ENCODE measurements at regions of chr6 and their contacts with region 1.

Region 1: GRCh38 chr6:32971581-32972352 is 3.4 kb downstream of the BRD2 start:
- DNase-seq: peak in 1 of 2 donors; percentile 100
- H3K4me3 ChIP-seq: peak overlapping the region; percentile 71 to 80
- H3K27ac ChIP-seq: peak overlapping the region; percentile 100
- H3K4me1 ChIP-seq: peaks cover 40% of the 10 kb centered on the region
- H3K27me3 ChIP-seq: no peaks in the 10 kb centered on the region
- CTCF ChIP-seq: peak in 1 of 3 experiments; percentile 4
- POLR2A ChIP-seq: peak; percentile 81 to 100

Region 2: GRCh38 chr6:31197559-31198305 is 1774.0 kb before region 1 on chr6:
- intact Hi-C with region 1: no loop called
- DNase-seq: no peak
- H3K4me3 ChIP-seq: peak overlapping the region; percentile 60 to 71
- H3K27ac ChIP-seq: peak overlapping the region; percentile 93
- H3K4me1 ChIP-seq: peaks cover 12% of the 10 kb centered on the region
- H3K27me3 ChIP-seq: no peaks in the 10 kb centered on the region
- CTCF ChIP-seq: no peak
- POLR2A ChIP-seq: peak in 1 of 2 donors; percentile 71

Region 3: GRCh38 chr6:31971993-31972708 is 999.6 kb before region 1 on chr6 and contains the start of gene DXO:
- intact Hi-C with region 1: loop called (anchors 10 kb)
- DNase-seq: peak in 1 of 2 donors; percentile 99
- H3K4me3 ChIP-seq: peak within 1 kb of the TSS; percentile 74 to 76
- H3K27ac ChIP-seq: peak within 1 kb of the TSS; percentile 95
- H3K4me1 ChIP-seq: peaks cover 42% of the 10 kb centered on the region
- H3K27me3 ChIP-seq: no peaks in the 10 kb centered on the region
- CTCF ChIP-seq: no peak
- POLR2A ChIP-seq: peak in 1 of 2 donors; percentile 41
- total RNA-seq, gene DXO: 15.5 TPM

Region 4: GRCh38 chr6:32843979-32844838 is 127.6 kb before region 1 on chr6 and contains the start of gene PSMB8:
- intact Hi-C with region 1: loop called (anchors 5 kb)
- DNase-seq: peak in 1 of 2 donors; percentile 98
- H3K4me3 ChIP-seq: peak within 1 kb of the TSS; percentile 57 to 86
- H3K27ac ChIP-seq: peak within 1 kb of the TSS; percentile 99
- H3K4me1 ChIP-seq: peaks cover 26% of the 10 kb centered on the region
- H3K27me3 ChIP-seq: no peaks in the 10 kb centered on the region
- CTCF ChIP-seq: no peak
- POLR2A ChIP-seq: peak; percentile 62 to 95
- total RNA-seq, gene PSMB8: 31.9 TPM

Region 5: GRCh38 chr6:32894080-32895005 is 77.4 kb before region 1 on chr6:
- intact Hi-C with region 1: loop called (anchors 5 kb)
- DNase-seq: peak in 1 of 2 donors; percentile 95
- H3K4me3 ChIP-seq: peak overlapping the region; percentile 75 to 79
- H3K27ac ChIP-seq: peak overlapping the region; percentile 95
- H3K4me1 ChIP-seq: peaks cover 34% of the 10 kb centered on the region
- H3K27me3 ChIP-seq: no peaks in the 10 kb centered on the region
- CTCF ChIP-seq: no peak
- POLR2A ChIP-seq: peak in 1 of 2 donors; percentile 45

Region 6: DNA sequence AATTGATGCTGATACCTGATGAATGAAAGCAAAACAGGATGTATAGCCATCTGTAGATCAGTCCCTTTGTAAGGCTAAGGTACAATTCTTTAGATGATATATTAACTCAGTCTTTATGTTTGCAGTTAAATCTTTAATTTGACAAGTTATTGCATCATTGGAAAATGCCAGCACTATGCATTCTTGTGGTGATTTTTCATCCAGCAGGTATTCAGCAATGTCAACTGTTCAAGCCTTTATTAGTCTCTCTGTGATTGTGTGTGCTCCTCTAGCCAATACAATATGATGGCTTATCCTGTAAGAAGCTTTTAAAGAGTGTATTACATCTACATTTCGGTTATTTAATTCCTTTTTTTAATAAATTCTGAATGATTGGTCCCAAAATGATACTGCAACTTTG is 65.2 kb before region 1 on chr6:
- intact Hi-C with region 1: no loop called
- DNase-seq: no peak
- H3K4me3 ChIP-seq: no peak overlapping the region
- H3K27ac ChIP-seq: no peak overlapping the region
- H3K4me1 ChIP-seq: no peaks in the 10 kb centered on the region
- H3K27me3 ChIP-seq: no peaks in the 10 kb centered on the region
- CTCF ChIP-seq: no peak
- POLR2A ChIP-seq: no peak

Region 7: GRCh38 chr6:33904050-33904746 is 932.4 kb after region 1 on chr6:
- intact Hi-C with region 1: no loop called
- DNase-seq: no peak
- H3K4me3 ChIP-seq: no peak overlapping the region
- H3K27ac ChIP-seq: no peak overlapping the region
- H3K4me1 ChIP-seq: peaks cover 13% of the 10 kb centered on the region
- H3K27me3 ChIP-seq: no peaks in the 10 kb centered on the region
- CTCF ChIP-seq: no peak
- POLR2A ChIP-seq: no peak